Mammary epithelial cell (primary cell): ENCODE measurements at regions of chr4 and their contacts with region 1.

Region 1: GRCh38 chr4:7736436-7737269 is 203.0 kb downstream of the AFAP1 start:
- DNase-seq: no peak
- H3K4me3 ChIP-seq: no peak overlapping the region
- H3K27ac ChIP-seq: no peak overlapping the region
- H3K4me1 ChIP-seq: no peaks in the 10 kb centered on the region
- H3K27me3 ChIP-seq: no peaks in the 10 kb centered on the region
- CTCF ChIP-seq: no peak

Region 2: GRCh38 chr4:7280926-7281690 is 455.5 kb before region 1 on chr4:
- CTCF ChIA-PET with region 1: no interaction called
- dilution Hi-C with region 1: loop called (anchors 10 kb)
- in situ Hi-C with region 1: no loop called
- intact Hi-C with region 1: no loop called
- DNase-seq: peak; percentile 87
- H3K4me3 ChIP-seq: no peak overlapping the region
- H3K27ac ChIP-seq: no peak overlapping the region
- H3K4me1 ChIP-seq: peaks cover 26% of the 10 kb centered on the region
- H3K27me3 ChIP-seq: no peaks in the 10 kb centered on the region
- CTCF ChIP-seq: no peak

Region 3: GRCh38 chr4:7595934-7596461 is 140.7 kb before region 1 on chr4:
- CTCF ChIA-PET with region 1: no interaction called
- dilution Hi-C with region 1: loop called (anchors 10 kb)
- in situ Hi-C with region 1: no loop called
- intact Hi-C with region 1: no loop called
- DNase-seq: no peak
- H3K4me3 ChIP-seq: no peak overlapping the region
- H3K27ac ChIP-seq: no peak overlapping the region
- H3K4me1 ChIP-seq: no peaks in the 10 kb centered on the region
- H3K27me3 ChIP-seq: no peaks in the 10 kb centered on the region
- CTCF ChIP-seq: no peak

Region 4: GRCh38 chr4:7668271-7668670 is 68.4 kb before region 1 on chr4:
- CTCF ChIA-PET with region 1: no interaction called
- dilution Hi-C with region 1: loop called (anchors 5 kb)
- in situ Hi-C with region 1: no loop called
- intact Hi-C with region 1: no loop called
- DNase-seq: no peak
- H3K4me3 ChIP-seq: no peak overlapping the region
- H3K27ac ChIP-seq: no peak overlapping the region
- H3K4me1 ChIP-seq: peaks cover 9% of the 10 kb centered on the region
- H3K27me3 ChIP-seq: no peaks in the 10 kb centered on the region
- CTCF ChIP-seq: no peak

Region 5: DNA sequence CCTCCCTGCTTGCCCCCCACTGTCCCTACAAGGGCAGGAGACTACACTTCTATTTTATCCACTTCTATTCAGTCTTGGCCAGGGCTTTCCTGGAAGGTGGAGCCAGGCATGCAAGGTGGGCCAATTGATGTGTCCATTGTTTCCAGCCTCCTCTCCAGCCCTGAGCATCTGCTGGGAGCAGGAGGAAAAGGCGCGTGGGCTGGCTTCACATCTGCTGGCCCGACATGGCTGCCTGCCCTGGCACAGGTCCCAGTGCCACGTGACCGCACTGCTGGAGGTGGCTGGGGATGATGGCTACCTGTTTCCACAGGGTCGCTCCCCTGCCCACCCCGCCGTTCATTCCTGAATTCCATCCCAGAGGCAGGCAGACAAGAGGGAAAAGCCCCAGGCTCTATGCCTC is 44.7 kb before region 1 on chr4:
- CTCF ChIA-PET with region 1: no interaction called
- dilution Hi-C with region 1: loop called (anchors 5 kb)
- in situ Hi-C with region 1: no loop called
- intact Hi-C with region 1: no loop called
- DNase-seq: no peak
- H3K4me3 ChIP-seq: no peak overlapping the region
- H3K27ac ChIP-seq: no peak overlapping the region
- H3K4me1 ChIP-seq: no peaks in the 10 kb centered on the region
- H3K27me3 ChIP-seq: no peaks in the 10 kb centered on the region
- CTCF ChIP-seq: no peak

Region 6: DNA sequence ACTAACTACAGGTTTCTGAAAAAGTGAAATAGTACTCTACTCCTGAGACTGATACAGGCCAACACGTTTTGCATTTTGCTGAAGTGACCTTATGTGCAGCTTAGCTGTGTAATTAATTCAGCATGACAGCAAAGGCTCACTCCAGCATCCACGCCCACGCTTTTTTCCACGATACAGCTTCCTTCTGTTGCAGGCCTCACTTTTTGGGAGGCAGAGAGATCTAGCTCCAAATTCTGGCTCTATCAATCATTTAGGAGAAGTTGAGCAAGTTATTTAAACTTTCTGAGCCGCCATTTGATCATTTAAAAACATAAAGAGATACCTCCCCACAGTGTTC is 42.7 kb after region 1 on chr4:
- CTCF ChIA-PET with region 1: no interaction called
- dilution Hi-C with region 1: loop called (anchors 5 kb)
- in situ Hi-C with region 1: no loop called
- intact Hi-C with region 1: no loop called
- DNase-seq: no peak
- H3K4me3 ChIP-seq: no peak overlapping the region
- H3K27ac ChIP-seq: no peak overlapping the region
- H3K4me1 ChIP-seq: no peaks in the 10 kb centered on the region
- H3K27me3 ChIP-seq: no peaks in the 10 kb centered on the region
- CTCF ChIP-seq: no peak